OCI-LY7 (cell line): ENCODE measurements at regions of chr3 and their contacts with region 1.

Region 1: DNA sequence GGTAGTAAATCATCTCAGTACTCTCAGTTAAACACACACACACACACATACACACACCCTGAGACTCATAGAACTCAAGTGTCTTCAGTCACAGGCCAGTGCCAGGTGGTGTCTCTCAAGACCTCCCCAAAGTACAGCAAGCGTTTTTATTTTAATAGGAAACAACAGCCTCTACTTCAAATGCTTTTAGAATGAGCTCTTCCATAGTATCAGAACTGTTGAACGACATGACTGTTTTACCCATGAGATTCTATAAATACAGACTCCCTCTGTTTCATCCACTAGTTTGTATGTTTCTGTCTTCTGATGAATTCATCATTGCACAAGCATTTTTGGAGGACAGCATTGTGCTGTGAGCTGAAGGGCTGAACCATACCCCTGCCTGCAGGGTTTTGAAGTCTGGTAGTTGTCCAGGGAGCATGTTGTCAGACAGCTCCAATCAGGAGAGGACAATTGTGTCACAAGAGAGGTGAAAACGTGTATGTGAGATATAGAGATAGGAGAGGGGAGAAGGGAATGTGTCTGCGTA is 201.0 kb upstream of the BCL6 start:
- DNase-seq: peak; percentile 90
- H3K4me3 ChIP-seq: peak overlapping the region; percentile 69
- H3K27ac ChIP-seq: peak overlapping the region; percentile 99
- H3K4me1 ChIP-seq: peaks cover 100% of the 10 kb centered on the region
- CTCF ChIP-seq: peak; percentile 41; the same call in 1 of the 2 replicates

Region 2: GRCh38 chr3:187507268-187507667 is 439.0 kb before region 1 on chr3:
- CTCF ChIA-PET with region 1: no interaction called
- POLR2A ChIA-PET with region 1: no interaction called
- intact Hi-C with region 1: no loop called
- DNase-seq: no peak
- H3K4me3 ChIP-seq: no peak overlapping the region
- H3K27ac ChIP-seq: no peak overlapping the region
- H3K4me1 ChIP-seq: no peaks in the 10 kb centered on the region
- CTCF ChIP-seq: no peak

Region 3: DNA sequence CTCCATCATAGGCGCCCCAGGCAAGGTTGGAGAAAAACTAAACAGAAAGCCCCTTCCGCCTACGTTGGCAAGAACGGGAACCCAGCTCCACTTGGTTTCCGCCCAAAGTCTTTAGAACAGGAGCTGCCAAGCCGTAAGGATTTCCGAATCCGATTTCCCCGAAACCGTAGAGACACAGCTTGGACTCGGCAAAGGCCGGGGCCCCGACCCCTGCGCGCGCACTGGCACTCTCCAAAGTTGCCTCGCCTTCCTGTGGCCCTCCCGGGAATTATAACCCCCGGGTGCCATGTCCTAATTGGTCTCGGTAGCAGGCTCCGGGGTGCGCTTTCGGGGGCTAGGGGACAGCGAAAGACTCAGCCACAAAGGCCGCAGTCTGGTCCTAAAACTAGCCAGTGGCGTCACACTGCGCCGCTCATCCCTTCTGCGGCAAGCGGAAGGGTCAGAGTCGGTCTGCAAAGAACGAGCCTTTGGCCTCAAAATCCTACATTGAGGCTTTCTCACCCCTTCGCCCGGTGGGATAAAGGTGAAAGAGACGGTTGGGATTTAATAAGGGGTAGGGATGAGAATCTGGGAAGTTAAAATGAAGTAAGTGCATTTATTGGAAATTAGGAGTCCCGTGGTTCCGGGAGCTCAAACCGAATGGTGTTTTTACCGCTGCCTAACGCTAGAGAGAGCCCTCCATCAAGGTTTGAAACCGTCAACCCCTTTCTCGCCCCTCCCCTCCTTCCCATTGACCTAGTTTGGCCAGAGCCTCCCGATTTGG is 207.7 kb before region 1 on chr3:
- CTCF ChIA-PET with region 1: interaction called, 6 read pairs
- POLR2A ChIA-PET with region 1: interaction called, 69 read pairs
- intact Hi-C with region 1: loop called (anchors 1 kb)
- DNase-seq: peak; percentile 76
- H3K4me3 ChIP-seq: peak overlapping the region; percentile 86
- H3K27ac ChIP-seq: peak overlapping the region; percentile 90
- H3K4me1 ChIP-seq: peaks cover 60% of the 10 kb centered on the region
- CTCF ChIP-seq: peak; percentile 86

Region 4: GRCh38 chr3:187902041-187902471 is 44.2 kb before region 1 on chr3:
- CTCF ChIA-PET with region 1: interaction called, 13 read pairs
- POLR2A ChIA-PET with region 1: interaction called, 476 read pairs
- intact Hi-C with region 1: loop called (anchors 1 kb)
- DNase-seq: peak; percentile 96
- H3K4me3 ChIP-seq: peak overlapping the region; percentile 59
- H3K27ac ChIP-seq: peak overlapping the region; percentile 100
- H3K4me1 ChIP-seq: peaks cover 98% of the 10 kb centered on the region
- CTCF ChIP-seq: no peak

Region 5: DNA sequence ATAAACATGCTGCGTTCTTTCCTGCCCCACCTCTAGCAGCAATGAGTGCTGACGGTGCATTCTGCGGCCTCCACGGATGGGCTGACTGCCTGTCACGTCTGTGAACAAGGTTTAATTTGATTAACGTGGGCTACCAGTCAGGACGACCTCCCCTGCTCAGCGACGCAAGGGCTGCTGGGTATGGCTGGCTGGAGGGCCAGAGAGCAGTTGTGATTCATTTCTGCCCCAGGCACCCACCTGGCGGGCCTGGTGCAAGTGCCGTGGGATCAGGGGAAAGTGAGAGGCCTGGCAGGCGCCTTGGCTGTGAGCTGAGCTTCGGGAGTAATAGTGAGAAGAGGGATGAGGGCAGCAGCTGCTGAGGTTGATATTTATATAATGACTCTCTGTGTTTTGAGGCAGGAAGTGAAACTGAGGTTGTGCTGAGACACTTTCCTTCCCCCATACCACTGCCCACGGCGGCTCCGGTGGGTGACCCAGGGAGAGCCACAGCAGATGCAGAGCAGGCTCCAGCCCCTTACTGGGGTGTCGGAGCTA is 10.5 kb before region 1 on chr3:
- CTCF ChIA-PET with region 1: interaction called, 9 read pairs
- POLR2A ChIA-PET with region 1: interaction called, 331 read pairs
- intact Hi-C with region 1: no loop called
- DNase-seq: peak; percentile 91
- H3K4me3 ChIP-seq: peak overlapping the region; percentile 25
- H3K27ac ChIP-seq: peak overlapping the region; percentile 99
- H3K4me1 ChIP-seq: peaks cover 100% of the 10 kb centered on the region
- CTCF ChIP-seq: no peak

Region 6: DNA sequence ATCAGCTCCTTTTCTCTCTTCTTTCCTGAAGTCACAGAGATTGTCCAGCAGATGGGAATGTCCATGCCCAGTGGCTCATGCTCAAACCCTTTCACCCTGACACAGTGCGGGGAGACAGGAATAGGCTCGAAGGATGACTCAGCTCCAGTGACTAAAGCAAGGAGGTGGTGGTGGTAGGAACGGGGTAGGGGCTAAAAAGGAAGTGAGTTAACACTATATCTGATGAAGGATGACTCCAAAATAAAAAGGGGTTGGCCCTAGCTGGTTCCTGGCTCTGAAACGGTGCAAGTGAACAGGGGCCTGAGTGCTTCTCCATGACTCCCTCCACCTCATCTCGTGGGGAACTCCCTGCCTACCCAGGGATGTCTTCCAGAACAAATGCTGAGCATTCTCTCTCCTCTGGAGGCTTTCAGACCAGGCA is 40.3 kb after region 1 on chr3:
- CTCF ChIA-PET with region 1: interaction called, 4 read pairs
- POLR2A ChIA-PET with region 1: interaction called, 241 read pairs
- intact Hi-C with region 1: no loop called
- DNase-seq: no peak
- H3K4me3 ChIP-seq: no peak overlapping the region
- H3K27ac ChIP-seq: peak overlapping the region; percentile 2
- H3K4me1 ChIP-seq: peaks cover 95% of the 10 kb centered on the region
- CTCF ChIP-seq: no peak

Region 7: GRCh38 chr3:188097791-188098190 is 151.6 kb after region 1 on chr3:
- CTCF ChIA-PET with region 1: no interaction called
- POLR2A ChIA-PET with region 1: interaction called, 134 read pairs
- intact Hi-C with region 1: no loop called
- DNase-seq: peak; percentile 90
- H3K4me3 ChIP-seq: peak overlapping the region; percentile 41
- H3K27ac ChIP-seq: peak overlapping the region; percentile 81
- H3K4me1 ChIP-seq: peaks cover 52% of the 10 kb centered on the region
- CTCF ChIP-seq: no peak

Region 8: DNA sequence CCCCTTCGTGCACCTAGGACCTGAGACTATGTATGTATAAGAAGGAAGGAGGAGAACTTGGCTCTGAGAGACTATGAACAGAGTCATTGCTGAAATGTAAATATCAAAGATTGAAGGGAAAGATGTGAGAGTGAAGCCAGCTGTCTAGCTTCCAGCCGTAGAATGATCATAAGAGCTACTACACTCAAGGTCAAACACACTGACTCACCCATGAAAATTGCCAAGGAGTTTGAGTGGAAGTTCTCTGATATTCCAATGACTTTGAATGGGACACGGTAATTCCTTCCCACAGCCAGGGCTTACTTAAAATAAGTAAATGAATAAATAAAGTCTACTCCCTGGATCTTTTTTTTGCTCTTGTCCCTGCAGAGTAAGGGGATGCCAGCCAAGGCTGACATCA is 826.7 kb after region 1 on chr3:
- CTCF ChIA-PET with region 1: no interaction called
- POLR2A ChIA-PET with region 1: no interaction called
- intact Hi-C with region 1: no loop called
- DNase-seq: no peak
- H3K4me3 ChIP-seq: no peak overlapping the region
- H3K27ac ChIP-seq: no peak overlapping the region
- H3K4me1 ChIP-seq: no peaks in the 10 kb centered on the region
- CTCF ChIP-seq: no peak